ENCODE measurements at regions of chr19 and their contacts with region 1.

Region 1: GRCh38 chr19:3108775-3109174 is 14.6 kb downstream of the GNA11 start:
- DNase-seq: no peak
- ATAC-seq: peak; percentile 77
- H3K4me3 ChIP-seq: no peak overlapping the region
- H3K27ac ChIP-seq: no peak overlapping the region
- H3K4me1 ChIP-seq: peaks cover 3 to 5% of the 10 kb centered on the region in 2 experiments; a peak in 3 of 4 replicates
- H3K27me3 ChIP-seq: no peaks in the 10 kb centered on the region
- CTCF ChIP-seq: peak; percentile 49 to 95 (median 89); a peak in 5 of 6 replicates
- POLR2A ChIP-seq: no peak
- RAD21 ChIP-seq: no peak

Region 2: DNA sequence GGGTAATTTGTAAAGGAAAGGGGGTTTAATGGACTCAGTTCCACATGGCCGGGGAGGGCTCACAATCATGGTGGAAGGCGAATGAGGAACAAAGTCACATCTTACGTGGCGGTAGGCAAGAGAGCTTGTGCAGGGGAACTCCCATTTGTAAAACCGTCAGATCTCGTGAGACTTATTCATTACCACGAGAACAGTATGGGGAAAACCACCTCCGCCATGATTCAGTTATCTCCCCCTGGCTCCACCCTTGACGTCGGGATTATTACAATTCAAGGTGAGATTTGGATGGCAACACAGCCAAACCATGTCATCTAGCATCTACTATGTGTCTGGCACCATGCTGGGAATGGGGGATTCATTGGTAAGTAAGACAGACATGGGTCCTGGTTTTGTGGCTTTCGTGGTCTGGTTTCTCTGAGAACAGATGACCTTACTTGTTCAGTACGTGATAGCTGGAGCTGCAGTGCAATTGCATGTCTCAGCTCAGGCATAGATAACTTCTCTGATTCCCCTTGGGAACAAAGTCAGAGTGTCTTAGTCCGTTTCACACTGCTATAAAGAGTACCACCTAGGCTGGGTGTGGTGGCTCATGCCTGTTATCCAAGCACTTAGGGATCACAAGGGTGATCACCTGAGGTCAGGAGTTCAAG is 280.8 kb before region 1 on chr19:
- CTCF ChIA-PET with region 1: no interaction called
- POLR2A ChIA-PET with region 1: no interaction called
- RAD21 ChIA-PET with region 1: no interaction called
- intact Hi-C with region 1: no loop called
- DNase-seq: no peak
- ATAC-seq: no peak
- H3K4me3 ChIP-seq: no peak overlapping the region
- H3K27ac ChIP-seq: no peak overlapping the region
- H3K4me1 ChIP-seq: no peaks in the 10 kb centered on the region
- H3K27me3 ChIP-seq: no peaks in the 10 kb centered on the region
- CTCF ChIP-seq: no peak
- POLR2A ChIP-seq: no peak
- RAD21 ChIP-seq: no peak

Region 3: DNA sequence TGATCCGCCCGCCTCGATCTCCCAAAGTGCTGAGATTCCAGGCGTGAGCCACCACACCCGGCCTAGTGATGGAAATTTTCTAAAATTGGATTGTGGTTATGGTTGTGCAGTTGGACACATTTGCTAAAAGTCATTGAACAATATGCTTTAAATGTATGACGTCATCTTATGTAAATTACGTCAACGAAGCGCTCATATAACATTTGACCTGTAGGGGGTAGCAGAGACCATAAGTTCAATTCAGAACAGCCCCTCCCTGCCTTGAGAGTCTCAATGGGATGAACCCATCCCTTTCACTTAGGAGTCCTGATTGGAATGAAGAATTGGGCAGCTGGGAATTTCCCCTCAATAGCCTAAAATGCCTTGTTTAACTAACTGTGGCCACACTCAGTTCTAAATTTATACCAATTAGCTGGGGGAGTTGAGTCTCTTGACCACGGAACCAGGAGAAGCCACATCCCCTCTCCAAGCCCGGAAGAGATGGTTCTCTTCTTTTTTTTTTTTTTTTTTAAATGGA is 146.7 kb before region 1 on chr19:
- CTCF ChIA-PET with region 1: interaction called, 19 read pairs
- POLR2A ChIA-PET with region 1: no interaction called
- RAD21 ChIA-PET with region 1: interaction called, 4 to 6 read pairs
- intact Hi-C with region 1: loop called (anchors 2 kb)
- DNase-seq: peak; percentile 68
- ATAC-seq: peak; percentile 70
- H3K4me3 ChIP-seq: no peak overlapping the region
- H3K27ac ChIP-seq: no peak overlapping the region
- H3K4me1 ChIP-seq: no peaks in the 10 kb centered on the region; a peak in 1 of 4 replicates
- H3K27me3 ChIP-seq: no peaks in the 10 kb centered on the region
- CTCF ChIP-seq: peak; percentile 53 to 85 (median 77)
- POLR2A ChIP-seq: no peak
- RAD21 ChIP-seq: peak; percentile 92

Measured in HCT116 (cell line).